T-cell (primary cell): ENCODE measurements at regions of chr2 and their contacts with region 1.

Region 1: DNA sequence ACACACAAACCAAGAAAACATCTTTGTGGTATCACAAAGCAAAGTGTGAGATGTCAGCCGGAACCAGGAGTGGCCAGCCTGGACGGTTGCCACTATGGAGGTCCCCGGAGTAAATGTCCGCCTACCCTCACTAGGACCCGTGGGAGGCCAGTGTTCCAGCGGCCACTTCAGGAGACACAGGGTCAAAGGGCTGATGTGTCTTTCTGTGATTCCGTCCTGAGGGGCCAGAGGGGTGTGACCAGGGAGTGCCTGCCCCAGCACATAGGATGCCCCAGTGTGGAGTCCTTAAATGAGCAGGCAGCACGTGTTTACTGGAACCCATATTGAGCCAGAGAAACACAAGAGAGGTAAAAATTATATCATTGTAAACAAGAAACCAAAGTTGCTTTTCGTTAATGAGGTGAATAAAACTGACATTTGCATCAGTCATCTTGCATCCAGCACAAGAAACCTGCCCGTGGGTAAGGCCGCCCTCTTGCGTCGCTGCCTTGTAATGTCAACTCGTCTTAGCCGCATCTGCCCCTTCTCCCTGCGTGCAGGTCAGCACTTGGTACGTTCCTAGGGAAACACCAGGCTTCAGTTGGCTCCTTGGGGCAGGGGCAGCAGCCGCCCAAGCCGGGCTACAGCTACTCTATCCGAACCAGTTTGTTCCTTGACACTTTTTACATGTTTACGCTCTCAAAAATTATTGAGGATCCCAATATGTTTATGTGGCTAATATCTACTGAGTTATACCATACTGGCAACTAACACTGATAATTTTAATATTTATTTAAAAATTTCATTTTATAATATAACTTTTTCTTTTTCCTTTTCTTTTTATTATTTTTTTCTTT is 46.7 kb upstream of the LAPTM4A start:
- DNase-seq: peak; percentile 34 to 84 (median 66)
- ATAC-seq: peak; percentile 84 to 87 (median 86)
- H3K4me3 ChIP-seq: no peak overlapping the region
- H3K4me3 Mint-ChIP-seq: no peak overlapping the region
- H3K27ac ChIP-seq: no peak overlapping the region
- H3K27ac Mint-ChIP-seq: no peak overlapping the region
- H3K4me1 ChIP-seq: peaks cover 0 to 3% of the 10 kb centered on the region in 2 experiments
- H3K4me1 Mint-ChIP-seq: no peaks in the 10 kb centered on the region
- H3K27me3 ChIP-seq: peaks cover 0 to 23% of the 10 kb centered on the region in 2 experiments
- H3K27me3 Mint-ChIP-seq: peaks cover 6 to 28% of the 10 kb centered on the region in 2 donors

Region 2: GRCh38 chr2:18741895-18742732 is 1356.0 kb before region 1 on chr2:
- CTCF ChIA-PET with region 1: interaction called in 1 of 2 experiments, 10 read pairs
- POLR2A ChIA-PET with region 1: no interaction called
- DNase-seq: no peak
- ATAC-seq: no peak
- H3K4me3 ChIP-seq: no peak overlapping the region
- H3K4me3 Mint-ChIP-seq: no peak overlapping the region
- H3K27ac ChIP-seq: no peak overlapping the region
- H3K27ac Mint-ChIP-seq: no peak overlapping the region
- H3K4me1 ChIP-seq: no peaks in the 10 kb centered on the region
- H3K4me1 Mint-ChIP-seq: no peaks in the 10 kb centered on the region
- H3K27me3 ChIP-seq: no peaks in the 10 kb centered on the region
- H3K27me3 Mint-ChIP-seq: no peaks in the 10 kb centered on the region

Region 3: GRCh38 chr2:19893520-19894133 is 204.5 kb before region 1 on chr2:
- CTCF ChIA-PET with region 1: no interaction called
- POLR2A ChIA-PET with region 1: interaction called in 1 of 2 experiments, 14 read pairs
- DNase-seq: no peak
- ATAC-seq: no peak
- H3K4me3 ChIP-seq: no peak overlapping the region
- H3K4me3 Mint-ChIP-seq: no peak overlapping the region
- H3K27ac ChIP-seq: no peak overlapping the region
- H3K27ac Mint-ChIP-seq: no peak overlapping the region
- H3K4me1 ChIP-seq: peaks cover 6 to 14% of the 10 kb centered on the region in 2 experiments
- H3K4me1 Mint-ChIP-seq: peaks cover 46 to 60% (median 58%) of the 10 kb centered on the region in 3 donors
- H3K27me3 ChIP-seq: no peaks in the 10 kb centered on the region
- H3K27me3 Mint-ChIP-seq: no peaks in the 10 kb centered on the region